ENCODE measurements at regions of chrX and their contacts with region 1.

Region 1: DNA sequence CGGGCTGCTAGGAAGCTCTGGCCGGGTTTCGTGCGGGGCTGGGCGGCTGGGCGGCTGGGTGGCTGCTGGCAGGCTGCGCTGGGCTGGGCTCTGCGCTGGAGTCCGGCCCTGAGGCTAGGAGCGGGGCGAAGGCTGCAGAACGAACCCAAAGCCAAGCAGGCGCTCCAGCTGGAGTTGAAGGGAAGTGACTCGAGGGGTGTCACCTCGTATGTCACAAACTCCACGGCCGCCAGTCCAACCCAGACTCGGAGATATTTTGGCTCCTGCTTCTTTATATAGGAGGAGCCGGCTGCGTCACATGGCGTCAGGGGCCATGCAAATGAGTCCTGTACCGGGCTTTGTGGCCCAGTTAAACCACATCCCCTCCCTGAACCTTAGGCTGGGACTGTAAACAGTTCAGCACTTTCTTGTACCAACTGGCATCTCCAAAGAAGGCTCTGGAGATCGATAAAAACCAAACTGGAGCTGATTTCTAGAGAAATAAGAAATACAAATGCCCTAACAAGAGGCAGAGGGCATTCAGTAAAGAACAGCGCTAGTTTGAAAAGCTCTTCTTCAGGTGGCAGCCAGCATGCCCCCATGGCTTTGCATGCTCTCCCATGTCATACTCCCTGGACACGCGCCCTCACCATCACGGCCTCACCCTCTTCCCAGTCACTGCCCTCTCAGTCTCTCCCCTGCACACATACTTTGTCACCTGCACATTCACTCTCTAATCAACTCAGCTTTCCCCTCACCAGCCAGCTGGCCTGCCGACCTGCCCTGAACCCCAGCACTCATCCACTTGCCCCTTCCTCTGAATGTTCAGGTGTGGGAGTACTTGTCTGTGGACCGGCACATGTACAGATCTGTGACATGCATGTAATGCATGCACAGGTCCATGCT is 58.5 kb downstream of the TSC22D3 start:
- DNase-seq: peak; percentile 84
- H3K4me3 Mint-ChIP-seq: peak overlapping the region; percentile 74
- H3K27ac Mint-ChIP-seq: peak overlapping the region; percentile 60
- H3K4me1 Mint-ChIP-seq: peaks cover 21% of the 10 kb centered on the region
- H3K27me3 Mint-ChIP-seq: peaks cover 42% of the 10 kb centered on the region
- CTCF ChIP-seq: no peak

Region 2: GRCh38 chrX:107654872-107655761 is 61.9 kb before region 1 on chrX:
- CTCF ChIA-PET with region 1: interaction called, 10 read pairs
- POLR2A ChIA-PET with region 1: interaction called, 18 read pairs
- intact Hi-C with region 1: loop called (anchors 1 kb)
- DNase-seq: peak; percentile 84
- H3K4me3 Mint-ChIP-seq: peak overlapping the region; percentile 45
- H3K27ac Mint-ChIP-seq: peak overlapping the region; percentile 89
- H3K4me1 Mint-ChIP-seq: peaks cover 15% of the 10 kb centered on the region
- H3K27me3 Mint-ChIP-seq: peaks cover 44% of the 10 kb centered on the region
- CTCF ChIP-seq: peak; percentile 66

Region 3: GRCh38 chrX:107701493-107702121 is 15.5 kb before region 1 on chrX:
- CTCF ChIA-PET with region 1: interaction called, 5 read pairs
- POLR2A ChIA-PET with region 1: interaction called, 143 read pairs
- intact Hi-C with region 1: no loop called
- DNase-seq: no peak
- H3K4me3 Mint-ChIP-seq: no peak overlapping the region
- H3K27ac Mint-ChIP-seq: no peak overlapping the region
- H3K4me1 Mint-ChIP-seq: peaks cover 16% of the 10 kb centered on the region
- H3K27me3 Mint-ChIP-seq: peaks cover 56% of the 10 kb centered on the region
- CTCF ChIP-seq: no peak

Region 4: DNA sequence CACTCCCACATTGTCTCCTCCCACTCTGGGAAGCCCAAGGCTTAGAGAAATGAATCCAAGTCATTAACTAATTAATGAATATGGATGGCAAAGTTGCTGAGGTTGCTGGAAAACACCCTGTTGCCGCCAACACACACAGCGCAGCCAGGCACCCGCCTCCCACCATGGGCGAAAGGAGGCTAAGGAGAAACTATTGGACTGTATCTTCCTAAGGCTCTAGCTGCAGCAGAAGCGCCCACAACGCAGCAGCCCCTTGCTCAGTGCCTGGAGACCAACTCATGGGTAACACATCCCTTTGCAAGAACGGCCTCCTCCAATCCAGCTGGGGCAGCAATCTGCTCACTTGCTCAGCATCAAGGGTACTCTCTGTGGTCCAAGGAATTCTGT is 24.3 kb after region 1 on chrX:
- CTCF ChIA-PET with region 1: interaction called, 14 read pairs
- POLR2A ChIA-PET with region 1: interaction called, 75 read pairs
- intact Hi-C with region 1: loop called (anchors 1 kb)
- DNase-seq: no peak
- H3K4me3 Mint-ChIP-seq: no peak overlapping the region
- H3K27ac Mint-ChIP-seq: peak overlapping the region; percentile 93
- H3K4me1 Mint-ChIP-seq: peaks cover 37% of the 10 kb centered on the region
- H3K27me3 Mint-ChIP-seq: peaks cover 54% of the 10 kb centered on the region
- CTCF ChIP-seq: no peak

Region 5: DNA sequence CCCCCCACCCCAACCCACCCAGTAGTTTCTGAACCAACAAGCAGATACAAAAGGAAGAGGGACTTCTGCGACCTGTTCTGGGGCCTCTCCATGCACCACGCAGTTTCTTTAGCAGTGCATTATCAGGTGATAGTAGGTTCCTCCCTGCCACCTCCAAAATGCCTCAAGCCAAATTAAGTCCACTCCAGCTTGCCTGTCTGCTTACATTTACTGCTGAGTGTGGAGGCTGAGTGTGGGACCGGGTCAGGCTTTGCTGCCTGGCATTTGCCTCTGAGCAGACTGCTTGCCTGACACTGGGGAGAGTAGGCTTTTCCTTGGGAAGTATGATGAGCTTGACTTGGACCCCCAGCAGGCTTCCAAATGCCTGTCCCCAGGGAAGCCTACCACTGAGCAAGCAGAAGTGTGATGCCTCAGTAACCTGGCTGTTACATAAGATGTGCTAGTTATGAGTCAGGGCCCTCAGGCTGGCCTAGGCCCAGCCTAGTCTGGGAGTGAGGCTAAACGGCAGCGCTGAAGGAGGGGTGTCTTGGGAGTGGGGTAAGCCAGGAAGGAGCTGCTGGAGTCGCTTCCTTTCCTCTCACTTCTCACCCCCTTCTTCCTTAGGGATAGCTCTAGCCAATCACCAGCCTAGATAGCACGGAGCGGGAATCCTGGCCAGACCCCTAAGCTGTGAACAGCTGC is 49.6 kb after region 1 on chrX:
- CTCF ChIA-PET with region 1: interaction called, 4 read pairs
- POLR2A ChIA-PET with region 1: interaction called, 21 read pairs
- intact Hi-C with region 1: no loop called
- DNase-seq: peak; percentile 78
- H3K4me3 Mint-ChIP-seq: no peak overlapping the region
- H3K27ac Mint-ChIP-seq: no peak overlapping the region
- H3K4me1 Mint-ChIP-seq: no peaks in the 10 kb centered on the region
- H3K27me3 Mint-ChIP-seq: peaks cover 64% of the 10 kb centered on the region
- CTCF ChIP-seq: no peak

Measured in MCF 10A (cell line).